ENCODE measurements at regions of chr4 and their contacts with region 1.

Region 1: DNA sequence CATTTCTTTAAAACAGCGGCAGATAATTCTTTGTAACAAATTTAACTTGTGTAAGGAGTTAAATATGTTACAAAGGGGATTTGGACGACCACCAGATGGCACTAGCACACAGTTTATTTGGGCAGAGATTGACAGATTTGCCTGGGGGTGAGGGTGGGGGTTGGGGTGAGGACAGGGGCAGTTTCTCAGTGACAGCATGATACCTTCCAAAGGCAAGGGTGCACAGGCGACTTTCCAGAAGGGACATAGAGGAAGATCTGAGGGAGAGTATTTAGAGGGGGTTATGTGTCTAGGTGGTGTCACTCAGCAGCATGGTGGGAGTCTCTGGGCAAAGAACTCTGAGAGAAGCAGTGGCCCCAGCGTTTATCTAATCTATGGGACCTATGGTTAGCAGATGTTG is 9.6 kb upstream of the TMA16 start:
- DNase-seq: no peak
- H3K4me3 ChIP-seq: no peak overlapping the region
- H3K27ac ChIP-seq: no peak overlapping the region
- H3K4me1 ChIP-seq: peaks cover 4 to 48% (median 23%) of the 10 kb centered on the region in 6 donors
- H3K27me3 ChIP-seq: no peaks in the 10 kb centered on the region
- CTCF ChIP-seq: peak in 10 of 11 experiments; percentile 7 to 75 (median 58)
- POLR2A ChIP-seq: no peak

Region 2: DNA sequence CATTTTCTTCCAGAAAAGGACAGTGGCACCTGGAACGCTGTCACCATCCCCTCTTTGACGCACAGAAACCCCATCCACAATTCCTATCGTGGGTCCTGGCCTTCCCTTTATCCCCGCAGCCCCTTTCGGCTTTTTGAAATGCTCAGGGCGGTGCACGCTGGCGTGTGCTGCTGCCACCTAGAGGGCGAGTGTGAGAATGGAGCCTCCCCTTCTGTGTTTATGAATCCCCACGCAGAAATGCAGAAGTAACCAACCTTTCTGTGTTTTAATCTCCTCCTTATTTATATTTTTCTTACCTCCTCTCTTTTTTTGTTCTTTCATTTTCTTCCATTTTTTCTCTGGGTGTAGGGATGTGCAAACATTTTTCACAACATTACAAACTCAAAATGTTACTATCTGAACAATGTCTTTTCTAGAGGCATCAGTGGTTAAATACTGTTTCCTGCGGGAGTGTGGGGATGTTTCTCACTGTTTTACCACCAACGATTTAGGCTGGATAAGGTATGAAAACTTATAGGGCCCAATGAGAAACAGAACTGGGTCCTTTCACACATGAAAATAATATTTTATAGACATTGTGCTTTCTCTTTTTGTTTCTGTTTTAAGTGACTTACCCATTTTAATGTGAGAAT is 59.6 kb after region 1 on chr4:
- intact Hi-C with region 1: loop called (anchors 5 kb)
- DNase-seq: peak; percentile 88
- H3K4me3 ChIP-seq: peak overlapping the region in 2 of 8 donors; percentile 27 to 50
- H3K27ac ChIP-seq: peak overlapping the region in 5 of 8 donors; percentile 20 to 59 (median 45)
- H3K4me1 ChIP-seq: peaks cover 6 to 53% (median 25%) of the 10 kb centered on the region in 6 donors
- H3K27me3 ChIP-seq: no peaks in the 10 kb centered on the region
- CTCF ChIP-seq: peak; percentile 66 to 93 (median 88)
- POLR2A ChIP-seq: no peak

Region 3: DNA sequence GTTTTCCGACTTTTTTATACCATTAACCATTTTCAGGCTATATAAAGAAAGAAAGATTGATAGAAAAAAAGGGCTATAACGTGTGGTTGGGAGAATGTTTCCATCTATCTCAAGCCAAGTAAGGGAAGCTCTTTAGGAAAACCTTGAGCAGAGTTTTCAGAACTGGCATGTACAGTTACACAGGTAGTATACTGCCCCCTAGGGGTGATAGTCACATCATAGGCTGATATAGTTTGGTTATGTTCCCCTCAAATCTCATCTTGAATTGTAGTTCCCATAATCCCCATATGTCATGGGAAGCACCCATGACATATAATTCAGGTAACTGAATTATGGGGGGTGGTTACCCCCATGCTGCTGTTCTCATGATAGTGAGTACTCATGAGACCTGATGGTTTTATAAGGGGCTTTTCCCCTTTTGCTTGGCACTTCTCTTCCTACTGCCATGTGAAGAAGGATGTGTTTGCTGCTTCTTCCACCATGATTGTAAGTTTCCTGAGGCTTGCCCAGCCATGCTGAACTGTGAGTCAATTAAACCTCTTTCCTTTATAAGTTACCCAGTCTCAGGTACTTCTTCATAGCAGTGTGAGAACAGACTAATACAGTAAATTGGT is 196.4 kb after region 1 on chr4:
- intact Hi-C with region 1: loop called (anchors 10 kb)
- DNase-seq: no peak
- H3K4me3 ChIP-seq: no peak overlapping the region
- H3K27ac ChIP-seq: no peak overlapping the region
- H3K4me1 ChIP-seq: peaks cover 0 to 11% (median 0%) of the 10 kb centered on the region in 6 donors
- H3K27me3 ChIP-seq: no peaks in the 10 kb centered on the region
- CTCF ChIP-seq: peak; percentile 51 to 83 (median 70)
- POLR2A ChIP-seq: no peak